ENCODE measurements at regions of chr9 and their contacts with region 1.

Region 1: GRCh38 chr9:35553670-35554543 is 51.2 kb upstream of the TESK1 start:
- H3K4me3 Mint-ChIP-seq: no peak overlapping the region
- H3K27ac Mint-ChIP-seq: no peak overlapping the region
- H3K4me1 Mint-ChIP-seq: peaks cover 3% of the 10 kb centered on the region
- H3K27me3 Mint-ChIP-seq: no peaks in the 10 kb centered on the region

Region 2: DNA sequence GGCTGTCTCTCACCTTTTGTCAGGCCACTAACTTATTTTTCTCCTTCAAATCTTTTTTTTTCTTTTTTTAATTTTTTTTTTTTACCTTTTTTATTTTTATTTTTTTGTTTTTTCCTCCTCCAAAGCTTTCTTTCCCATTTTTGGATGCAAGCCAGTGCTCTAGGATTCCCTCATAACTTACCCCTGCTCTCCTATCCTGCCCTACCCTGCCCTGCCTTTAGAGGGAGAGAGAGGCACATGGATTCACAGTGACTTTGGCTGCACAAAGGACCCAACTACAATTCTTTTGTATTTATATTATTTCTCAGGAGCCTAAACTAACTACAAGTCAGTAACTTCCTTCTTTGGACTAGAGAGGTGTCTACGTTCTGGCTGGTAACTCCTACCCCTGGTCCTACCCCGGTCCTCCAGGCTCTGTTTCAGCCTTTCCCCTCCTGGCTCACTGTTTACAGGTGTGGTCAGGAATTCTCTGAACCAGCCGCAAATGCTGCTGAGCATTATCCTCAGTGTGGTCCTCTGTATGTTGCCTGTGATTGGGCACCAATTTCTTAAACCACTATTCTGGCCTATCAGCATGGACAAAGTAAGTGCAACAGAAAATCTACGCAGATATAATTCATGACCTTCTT is 72.4 kb before region 1 on chr9:
- intact Hi-C with region 1: loop called (anchors 1 kb)
- H3K4me3 Mint-ChIP-seq: no peak overlapping the region
- H3K27ac Mint-ChIP-seq: no peak overlapping the region
- H3K4me1 Mint-ChIP-seq: no peaks in the 10 kb centered on the region
- H3K27me3 Mint-ChIP-seq: peaks cover 3% of the 10 kb centered on the region

Region 3: GRCh38 chr9:35489313-35490154 is 64.4 kb before region 1 on chr9 and contains the start of gene RUSC2:
- intact Hi-C with region 1: loop called (anchors 2 kb)
- H3K4me3 Mint-ChIP-seq: peak within 1 kb of the TSS; percentile 90
- H3K27ac Mint-ChIP-seq: peak within 1 kb of the TSS; percentile 87
- H3K4me1 Mint-ChIP-seq: peaks cover 46% of the 10 kb centered on the region
- H3K27me3 Mint-ChIP-seq: no peaks in the 10 kb centered on the region